Activated CD4-positive, alpha-beta T cell treated with anti-CD3 and anti-CD28 coated beads for 36 hours (primary cell): ENCODE measurements at regions of chr20 and their contacts with region 1.

Region 1: DNA sequence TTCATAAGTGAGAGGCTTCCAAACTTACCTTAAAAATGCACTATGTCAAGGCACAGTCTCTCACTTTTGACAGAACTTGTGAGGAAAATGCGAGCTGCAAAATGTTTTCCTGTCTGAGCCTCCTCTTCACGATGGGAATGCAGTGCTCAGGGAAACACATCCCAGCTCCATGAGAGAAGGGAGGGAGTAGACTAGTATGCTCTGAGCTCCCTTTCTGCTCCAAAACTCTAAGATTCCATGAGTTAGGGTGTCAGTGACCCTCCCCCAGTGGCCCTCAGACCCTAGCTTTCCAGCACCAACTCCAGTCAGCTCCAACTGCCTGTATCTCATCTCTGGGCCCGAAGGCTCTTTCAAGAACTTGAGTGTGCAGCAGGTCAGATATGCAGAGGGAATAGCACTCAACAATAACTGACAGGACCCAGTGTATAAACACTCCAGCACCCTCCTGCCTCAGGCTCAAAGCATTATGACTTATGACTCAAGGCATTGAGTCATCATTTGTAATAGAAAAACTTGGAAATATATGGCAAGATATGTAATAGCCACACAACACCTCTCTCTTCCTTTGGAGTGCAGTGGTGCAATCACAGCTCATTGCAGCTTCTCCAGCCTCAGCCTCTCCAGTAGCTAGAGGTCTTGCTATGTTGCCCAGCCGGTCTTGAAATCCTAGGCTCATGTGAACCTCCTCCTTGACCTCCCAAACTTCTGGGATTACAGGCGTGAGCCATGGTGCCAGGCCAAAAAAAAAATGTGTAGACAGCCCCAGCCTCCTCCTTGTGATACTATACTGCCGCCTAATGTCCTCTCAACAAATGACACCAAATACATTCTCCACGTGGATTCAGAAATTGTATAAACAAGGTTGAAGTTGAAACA is 16.7 kb upstream of the ENTPD6 start:
- DNase-seq: peak; percentile 15
- ATAC-seq: peak; percentile 74
- H3K4me3 Mint-ChIP-seq: no peak overlapping the region
- H3K27ac Mint-ChIP-seq: no peak overlapping the region
- H3K4me1 Mint-ChIP-seq: peaks cover 2% of the 10 kb centered on the region
- H3K27me3 Mint-ChIP-seq: peaks cover 4% of the 10 kb centered on the region

Region 2: DNA sequence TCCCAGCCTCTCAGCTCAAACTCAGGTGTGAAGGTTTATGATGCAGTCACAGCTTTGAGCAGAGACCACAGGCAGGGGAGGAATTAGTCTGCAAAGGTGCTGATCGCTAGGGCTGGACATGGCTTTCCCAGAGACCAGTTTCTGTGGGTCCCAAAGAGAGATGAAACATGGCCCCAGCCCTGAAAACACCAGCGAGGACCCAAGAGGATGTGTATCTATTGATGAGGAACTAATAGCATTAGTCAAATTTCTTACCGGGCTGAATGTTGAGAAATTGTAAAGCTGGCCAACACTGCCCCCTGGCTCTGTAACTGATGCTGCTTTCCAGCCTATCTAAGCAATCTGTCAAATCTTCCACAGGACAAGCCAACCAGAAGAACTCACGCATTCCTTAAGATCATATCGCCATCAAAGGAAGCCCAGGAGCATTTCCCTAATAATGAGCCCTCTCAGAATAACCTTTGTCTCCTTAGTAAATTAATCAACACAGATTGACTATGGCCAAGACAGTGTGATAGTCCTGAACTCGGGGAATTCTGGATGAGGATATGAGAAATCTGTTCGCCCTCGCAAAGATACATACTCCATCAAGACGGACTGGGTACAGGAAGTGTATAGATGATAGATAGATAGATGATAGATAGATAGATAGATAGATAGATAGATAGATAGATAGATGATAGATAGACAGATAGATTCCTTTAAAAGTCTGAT is 113.0 kb before region 1 on chr20:
- CTCF ChIA-PET with region 1: interaction called, 3 read pairs
- POLR2A ChIA-PET with region 1: no interaction called
- intact Hi-C with region 1: loop called in 1 of 2 experiments (anchors 1 kb)
- DNase-seq: peak; percentile 75
- ATAC-seq: peak; percentile 79
- H3K4me3 Mint-ChIP-seq: no peak overlapping the region
- H3K27ac Mint-ChIP-seq: no peak overlapping the region
- H3K4me1 Mint-ChIP-seq: no peaks in the 10 kb centered on the region
- H3K27me3 Mint-ChIP-seq: peaks cover 19% of the 10 kb centered on the region

Region 3: GRCh38 chr20:25083773-25084625 is 94.8 kb before region 1 on chr20:
- CTCF ChIA-PET with region 1: interaction called, 3 read pairs
- POLR2A ChIA-PET with region 1: no interaction called
- intact Hi-C with region 1: loop called (anchors 1 to 2 kb)
- DNase-seq: peak; percentile 71
- ATAC-seq: peak; percentile 63
- H3K4me3 Mint-ChIP-seq: peak overlapping the region; percentile 47
- H3K27ac Mint-ChIP-seq: no peak overlapping the region
- H3K4me1 Mint-ChIP-seq: peaks cover 17% of the 10 kb centered on the region
- H3K27me3 Mint-ChIP-seq: peaks cover 52% of the 10 kb centered on the region

Region 4: DNA sequence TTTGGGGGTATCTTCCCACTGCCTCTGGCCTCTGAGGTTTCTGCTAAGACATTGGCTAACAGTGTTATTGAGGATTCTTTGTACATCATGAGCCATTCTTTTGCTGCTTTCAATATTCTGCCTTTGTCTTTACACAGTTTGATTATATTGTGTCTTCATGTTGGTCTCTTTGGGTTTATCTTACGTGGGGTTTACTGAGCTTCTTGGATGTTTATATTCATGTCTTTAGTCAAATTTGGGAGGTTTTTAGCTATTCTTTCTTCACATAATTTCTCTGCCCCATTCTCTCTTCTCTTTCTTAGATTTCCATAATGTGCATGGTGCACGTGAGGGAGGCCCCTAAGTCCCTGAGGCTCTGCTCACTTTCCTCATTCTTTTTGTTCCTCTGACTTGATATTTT is 24.3 kb after region 1 on chr20:
- CTCF ChIA-PET with region 1: no interaction called
- POLR2A ChIA-PET with region 1: no interaction called
- intact Hi-C with region 1: no loop called
- DNase-seq: no peak
- ATAC-seq: no peak
- H3K4me3 Mint-ChIP-seq: no peak overlapping the region
- H3K27ac Mint-ChIP-seq: no peak overlapping the region
- H3K4me1 Mint-ChIP-seq: peaks cover 41% of the 10 kb centered on the region
- H3K27me3 Mint-ChIP-seq: no peaks in the 10 kb centered on the region

Region 5: DNA sequence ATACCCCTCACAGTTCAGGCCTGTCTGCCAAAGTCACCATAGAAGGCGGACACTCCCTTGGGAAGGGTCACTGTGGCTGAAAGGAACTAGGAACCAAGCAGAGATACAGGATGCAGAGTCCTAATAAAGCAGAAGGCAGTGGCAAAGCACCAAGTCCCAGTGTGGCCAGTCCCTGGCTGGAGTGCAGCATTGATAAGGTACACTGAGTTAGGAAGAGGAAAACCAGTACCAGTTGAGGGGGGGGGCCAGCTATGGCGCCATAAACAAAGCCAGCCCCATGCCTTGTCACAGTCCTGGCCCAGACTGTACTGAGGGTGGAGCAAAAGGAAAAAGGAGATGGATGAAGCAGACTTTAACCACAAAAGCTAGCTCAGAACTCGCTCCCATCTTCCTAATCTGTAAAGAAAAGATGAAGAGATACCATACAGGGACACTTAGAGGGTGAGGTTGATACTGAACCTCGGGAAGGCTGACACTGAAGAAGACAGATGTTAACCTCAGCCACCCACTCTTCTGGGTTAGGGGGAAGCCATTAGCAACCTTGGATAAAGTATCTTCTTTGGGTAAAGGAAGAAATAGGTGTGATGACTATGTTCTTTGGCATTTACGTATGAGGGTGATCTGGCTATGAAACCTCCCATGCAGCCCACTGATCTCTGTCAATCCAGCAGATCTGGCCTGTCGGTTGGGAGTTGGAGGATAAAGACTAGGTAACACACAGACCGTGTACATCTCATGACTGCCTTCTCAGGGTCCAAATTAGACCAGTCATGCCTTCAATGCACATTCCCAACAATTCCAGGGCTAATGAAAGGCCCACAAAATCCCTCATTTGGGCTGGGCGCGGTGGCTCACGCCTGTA is 204.1 kb after region 1 on chr20:
- CTCF ChIA-PET with region 1: no interaction called
- POLR2A ChIA-PET with region 1: no interaction called
- intact Hi-C with region 1: no loop called
- DNase-seq: no peak
- ATAC-seq: peak; percentile 12
- H3K4me3 Mint-ChIP-seq: no peak overlapping the region
- H3K27ac Mint-ChIP-seq: no peak overlapping the region
- H3K4me1 Mint-ChIP-seq: peaks cover 12% of the 10 kb centered on the region
- H3K27me3 Mint-ChIP-seq: no peaks in the 10 kb centered on the region